ENCODE measurements at regions of chr11 and their contacts with region 1.

Region 1: GRCh38 chr11:62081378-62082291 is 42.2 kb upstream of the INCENP start:
- DNase-seq: no peak
- H3K4me3 ChIP-seq: no peak overlapping the region
- CTCF ChIP-seq: peak; percentile 80

Region 2: DNA sequence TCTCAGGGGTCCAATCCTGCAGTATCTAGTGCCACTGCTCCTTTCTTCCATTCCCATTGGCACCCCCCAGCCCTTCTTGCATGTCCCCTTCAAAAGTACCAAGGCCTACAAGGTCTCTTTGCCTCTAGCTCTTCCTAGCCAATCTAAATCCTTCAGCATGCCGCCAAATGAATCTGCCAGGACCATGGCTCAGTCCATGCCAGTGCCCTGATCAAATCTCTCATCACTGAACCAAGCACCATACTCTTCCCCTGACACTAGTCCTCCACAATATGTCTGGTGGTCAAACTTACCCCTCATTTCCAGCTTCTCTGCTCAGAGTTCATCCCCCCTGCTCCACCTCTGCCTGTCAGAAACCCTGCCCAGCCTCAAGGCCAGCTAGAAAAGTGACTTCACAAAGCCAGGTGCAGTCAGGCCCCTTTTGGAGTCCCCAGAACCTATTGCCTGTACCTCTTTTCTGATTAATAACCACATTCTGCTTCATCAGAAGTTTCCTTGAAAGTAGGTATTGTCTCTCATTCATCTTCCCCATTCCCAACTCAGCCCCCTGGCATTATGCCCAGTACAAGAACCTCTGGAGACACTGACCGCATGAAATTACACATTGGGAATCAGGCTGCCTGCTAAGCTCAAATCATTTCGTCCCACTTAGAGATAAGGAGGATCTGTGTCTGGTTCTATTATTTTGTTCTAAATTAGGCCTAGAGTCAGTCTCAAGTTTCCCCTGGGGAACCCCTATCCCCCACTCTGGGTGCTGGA is 277.6 kb before region 1 on chr11:
- CTCF ChIA-PET with region 1: interaction called, 105 read pairs
- POLR2A ChIA-PET with region 1: no interaction called
- DNase-seq: no peak
- H3K4me3 ChIP-seq: no peak overlapping the region
- CTCF ChIP-seq: no peak

Region 3: GRCh38 chr11:61879711-61880430 is 201.8 kb before region 1 on chr11:
- CTCF ChIA-PET with region 1: interaction called, 113 read pairs
- POLR2A ChIA-PET with region 1: no interaction called
- DNase-seq: no peak
- H3K4me3 ChIP-seq: no peak overlapping the region
- CTCF ChIP-seq: no peak

Region 4: GRCh38 chr11:61899146-61899841 is 182.3 kb before region 1 on chr11:
- CTCF ChIA-PET with region 1: interaction called, 406 read pairs
- POLR2A ChIA-PET with region 1: no interaction called
- DNase-seq: no peak
- H3K4me3 ChIP-seq: no peak overlapping the region
- CTCF ChIP-seq: peak; percentile 99

Region 5: DNA sequence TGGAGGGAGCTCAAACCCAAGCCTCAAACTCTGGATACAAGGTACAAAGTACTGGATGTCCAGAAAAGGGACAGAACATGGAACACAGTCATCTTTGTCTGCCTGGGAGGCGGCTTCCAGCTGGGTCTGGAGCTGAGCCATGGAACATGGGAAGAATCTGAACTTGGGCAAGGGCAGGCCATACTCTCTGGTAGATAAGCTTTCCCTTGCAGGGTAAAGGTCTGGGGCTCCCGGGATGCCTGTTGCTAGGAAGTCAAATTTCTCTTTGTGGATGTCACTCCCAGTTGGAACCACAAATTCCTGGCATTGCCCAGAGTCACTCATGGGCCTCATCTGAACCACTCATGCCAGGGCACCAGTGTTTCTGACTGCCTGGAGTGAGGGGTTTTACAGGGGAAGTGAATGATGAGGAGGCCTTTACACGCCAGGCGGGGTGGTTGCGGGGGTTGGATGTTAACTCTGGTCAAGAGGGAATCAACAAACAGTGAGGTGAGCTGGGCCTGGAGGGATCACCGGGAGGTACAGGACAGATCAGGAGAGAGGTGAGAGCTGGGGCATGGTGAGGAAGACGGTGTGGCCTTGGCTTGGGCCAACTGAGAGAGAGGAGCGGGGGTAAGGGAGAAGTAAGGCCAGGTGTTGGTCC is 119.9 kb before region 1 on chr11:
- CTCF ChIA-PET with region 1: interaction called, 146 read pairs
- POLR2A ChIA-PET with region 1: interaction called, 17 read pairs
- DNase-seq: no peak
- H3K4me3 ChIP-seq: no peak overlapping the region
- CTCF ChIP-seq: no peak

Region 6: GRCh38 chr11:62054484-62055121 is 27.0 kb before region 1 on chr11:
- CTCF ChIA-PET with region 1: interaction called, 16 read pairs
- POLR2A ChIA-PET with region 1: no interaction called
- DNase-seq: no peak
- H3K4me3 ChIP-seq: no peak overlapping the region
- CTCF ChIP-seq: peak; percentile 17

Region 7: DNA sequence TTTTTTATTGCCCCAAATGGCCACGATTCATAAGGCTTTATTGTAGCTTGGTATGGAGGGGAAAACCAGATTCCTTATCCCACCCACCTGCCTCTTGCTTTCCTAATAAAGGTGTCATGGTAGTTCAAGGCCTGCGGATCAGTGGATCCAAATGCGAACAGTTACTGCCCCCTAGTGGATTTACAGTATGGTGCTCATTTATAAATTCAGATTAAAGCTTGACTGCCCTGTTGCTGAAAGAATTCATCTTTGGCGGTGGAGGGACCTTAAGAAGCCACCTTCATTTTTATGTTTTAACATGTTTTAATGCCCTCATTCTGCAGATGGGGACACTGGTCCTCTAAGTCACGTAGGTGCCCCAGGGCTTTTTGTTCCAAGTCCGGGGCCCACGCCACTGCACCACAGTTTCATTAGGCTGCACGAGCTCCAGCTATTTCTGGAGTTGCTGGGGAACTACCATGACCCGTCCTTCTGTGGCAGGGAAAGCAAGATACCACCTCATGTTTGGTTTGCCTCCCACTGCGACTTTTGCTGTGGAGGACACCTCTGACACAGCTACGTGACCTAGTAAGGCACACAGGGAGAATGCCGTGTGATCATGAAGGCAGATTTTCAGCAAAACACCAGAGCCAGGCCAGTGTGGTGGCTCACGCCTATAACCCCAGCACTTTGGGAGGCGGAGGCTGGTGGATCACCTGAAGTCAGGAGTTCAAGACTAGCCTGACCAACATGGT is 26.5 kb after region 1 on chr11:
- CTCF ChIA-PET with region 1: interaction called, 132 read pairs
- POLR2A ChIA-PET with region 1: no interaction called
- DNase-seq: no peak
- H3K4me3 ChIP-seq: no peak overlapping the region
- CTCF ChIP-seq: peak; percentile 53

Region 8: GRCh38 chr11:62122076-62122475 is 40.4 kb after region 1 on chr11:
- CTCF ChIA-PET with region 1: no interaction called
- POLR2A ChIA-PET with region 1: no interaction called
- DNase-seq: no peak
- H3K4me3 ChIP-seq: no peak overlapping the region
- CTCF ChIP-seq: no peak

Region 9: DNA sequence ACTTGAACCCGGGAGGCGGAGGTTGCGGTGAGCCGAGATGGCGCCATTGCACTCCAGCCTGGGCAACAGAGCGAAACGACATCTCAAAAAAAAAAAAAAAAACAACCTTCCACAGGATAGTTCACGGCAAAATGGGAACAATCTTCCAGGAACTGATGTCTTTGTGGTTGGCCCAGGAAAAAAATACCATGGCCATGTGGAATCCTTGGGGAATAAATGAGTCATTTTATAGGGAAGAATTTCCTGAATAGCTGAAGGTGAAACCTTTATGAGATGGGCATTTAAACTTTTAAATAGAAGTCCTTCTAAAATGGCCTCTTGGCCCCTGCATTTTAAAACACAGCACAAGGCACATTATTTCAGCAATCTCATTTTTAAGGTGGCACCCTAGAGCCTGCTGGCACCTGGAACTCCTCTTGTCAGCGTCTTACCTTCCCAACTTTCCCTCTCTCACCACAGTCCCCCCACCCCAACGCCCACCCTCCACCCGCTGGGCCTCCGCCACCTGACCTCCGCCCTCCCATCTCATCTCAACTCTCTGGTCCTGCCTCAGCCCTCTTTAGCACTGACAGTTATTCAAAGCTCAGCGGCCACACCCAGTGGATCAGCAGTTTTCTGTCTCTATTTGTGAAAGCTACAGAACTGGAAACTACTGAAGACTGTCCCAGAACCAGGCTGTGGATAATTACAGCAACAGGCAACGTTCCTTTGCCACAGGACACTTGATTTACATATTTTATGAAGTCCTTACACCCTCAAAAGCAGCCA is 380.3 kb after region 1 on chr11:
- CTCF ChIA-PET with region 1: no interaction called
- POLR2A ChIA-PET with region 1: no interaction called
- DNase-seq: no peak
- H3K4me3 ChIP-seq: no peak overlapping the region
- CTCF ChIP-seq: no peak

Measured in AG04449 (cell line).